Natural killer cell (primary cell): ENCODE measurements at regions of chr19 and their contacts with region 1.

Region 1: GRCh38 chr19:33125929-33126388 is 6.0 kb upstream of the WDR88 start:
- DNase-seq: peak; percentile 30 to 84
- ATAC-seq: peak; percentile 81 to 97 (median 93)
- H3K4me3 ChIP-seq: no peak overlapping the region
- H3K4me3 Mint-ChIP-seq: no peak overlapping the region
- H3K27ac ChIP-seq: no peak overlapping the region
- H3K27ac Mint-ChIP-seq: no peak overlapping the region
- H3K4me1 ChIP-seq: peaks cover 4% of the 10 kb centered on the region
- H3K4me1 Mint-ChIP-seq: peaks cover 0 to 11% of the 10 kb centered on the region in 2 donors
- H3K27me3 ChIP-seq: no peaks in the 10 kb centered on the region
- H3K27me3 Mint-ChIP-seq: no peaks in the 10 kb centered on the region
- CTCF ChIP-seq: peak; percentile 87

Region 2: GRCh38 chr19:32971715-32972540 is 154.0 kb before region 1 on chr19 and contains the starts of genes CEP89 and FAAP24:
- intact Hi-C with region 1: loop called (anchors 10 kb)
- DNase-seq: peak; percentile 97 to 99
- ATAC-seq: peak; percentile 98 to 99 (median 98)
- H3K4me3 ChIP-seq: peak within 1 kb of the TSS; percentile 67
- H3K4me3 Mint-ChIP-seq: peak within 1 kb of the TSS; percentile 99
- H3K27ac ChIP-seq: peak within 1 kb of the TSS; percentile 85
- H3K27ac Mint-ChIP-seq: peak within 1 kb of the TSS; percentile 91 to 94
- H3K4me1 ChIP-seq: peaks cover 14% of the 10 kb centered on the region
- H3K4me1 Mint-ChIP-seq: peaks cover 0 to 16% of the 10 kb centered on the region in 2 donors
- H3K27me3 ChIP-seq: no peaks in the 10 kb centered on the region
- H3K27me3 Mint-ChIP-seq: no peaks in the 10 kb centered on the region
- CTCF ChIP-seq: no peak
- total RNA-seq, gene CEP89: 7.6 to 12.0 (median 10.3) TPM
- total RNA-seq, gene FAAP24: 1.8 to 4.1 (median 2.3) TPM

Region 3: DNA sequence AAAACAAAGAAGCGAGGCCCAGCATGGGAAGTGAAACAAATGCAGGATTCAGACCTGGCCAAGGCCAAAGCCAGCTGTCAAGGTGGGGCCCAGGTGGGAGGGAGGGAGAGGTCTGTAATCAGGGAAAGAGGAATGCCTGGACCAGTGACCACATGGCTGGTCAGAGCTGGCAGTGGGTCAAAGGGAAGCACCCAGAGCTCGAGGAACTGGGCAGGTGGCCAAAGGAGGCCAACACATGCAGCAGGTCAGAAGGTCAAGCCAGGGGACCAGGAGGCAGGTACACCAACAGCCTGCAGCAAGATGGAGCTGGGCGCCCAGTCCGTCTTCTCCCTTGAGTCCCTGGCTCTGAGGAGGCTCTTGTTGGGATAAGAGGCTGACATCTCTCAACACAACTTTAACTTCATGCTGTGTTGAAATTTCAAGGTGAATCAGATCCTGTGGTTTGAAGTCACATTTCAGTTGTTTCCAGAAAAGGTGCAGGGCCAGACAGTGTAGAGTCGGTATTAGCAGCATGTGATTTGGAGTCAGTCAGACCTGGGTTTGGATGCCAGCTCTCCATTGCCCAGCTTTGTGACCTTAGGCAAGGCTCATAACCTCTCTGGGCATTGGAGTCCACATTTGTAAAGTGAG is 27.8 kb before region 1 on chr19:
- intact Hi-C with region 1: no loop called
- DNase-seq: no peak
- ATAC-seq: no peak
- H3K4me3 ChIP-seq: no peak overlapping the region
- H3K4me3 Mint-ChIP-seq: no peak overlapping the region
- H3K27ac ChIP-seq: no peak overlapping the region
- H3K27ac Mint-ChIP-seq: peak overlapping the region in 1 of 2 donors; percentile 23
- H3K4me1 ChIP-seq: no peaks in the 10 kb centered on the region
- H3K4me1 Mint-ChIP-seq: peaks cover 0 to 7% of the 10 kb centered on the region in 2 donors
- H3K27me3 ChIP-seq: no peaks in the 10 kb centered on the region
- H3K27me3 Mint-ChIP-seq: no peaks in the 10 kb centered on the region
- CTCF ChIP-seq: no peak

Region 4: DNA sequence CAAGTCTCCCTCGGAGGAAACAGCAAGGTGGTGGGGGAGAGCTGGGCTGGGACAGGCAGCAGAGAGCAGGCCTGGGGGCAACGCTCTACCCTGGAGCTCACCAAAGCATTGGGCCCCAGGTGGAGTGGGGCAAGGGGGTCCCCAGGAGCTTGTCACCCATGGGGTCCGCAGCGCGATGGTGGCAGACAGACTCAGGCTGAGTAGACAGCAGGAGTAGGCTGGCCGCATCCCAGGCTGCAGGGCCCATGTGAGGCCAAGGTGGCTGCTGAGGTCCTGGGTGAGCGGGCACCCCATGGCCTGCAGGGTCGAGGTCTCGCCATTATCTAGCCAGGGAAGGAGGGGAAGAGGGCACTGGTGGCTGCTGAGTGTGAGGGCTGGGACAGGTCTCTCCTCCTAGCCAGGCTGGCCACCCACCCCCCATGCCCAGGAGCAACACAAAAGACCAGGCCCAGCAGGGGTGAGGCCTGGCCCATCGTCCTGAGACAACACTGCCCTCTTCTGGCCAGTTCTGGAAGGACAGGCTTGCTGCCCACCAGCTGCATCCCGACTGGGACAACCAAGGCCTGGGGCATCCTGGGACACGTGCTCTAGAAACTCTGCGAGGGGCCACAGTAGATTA is 280.7 kb after region 1 on chr19:
- intact Hi-C with region 1: loop called (anchors 1 kb)
- DNase-seq: peak; percentile 76 to 85
- ATAC-seq: peak; percentile 79 to 92 (median 90)
- H3K4me3 ChIP-seq: no peak overlapping the region
- H3K4me3 Mint-ChIP-seq: no peak overlapping the region
- H3K27ac ChIP-seq: no peak overlapping the region
- H3K27ac Mint-ChIP-seq: no peak overlapping the region
- H3K4me1 ChIP-seq: peaks cover 7% of the 10 kb centered on the region
- H3K4me1 Mint-ChIP-seq: no peaks in the 10 kb centered on the region
- H3K27me3 ChIP-seq: no peaks in the 10 kb centered on the region
- H3K27me3 Mint-ChIP-seq: no peaks in the 10 kb centered on the region
- CTCF ChIP-seq: peak; percentile 92